ENCODE measurements at regions of chr2 and their contacts with region 1.

Region 1: DNA sequence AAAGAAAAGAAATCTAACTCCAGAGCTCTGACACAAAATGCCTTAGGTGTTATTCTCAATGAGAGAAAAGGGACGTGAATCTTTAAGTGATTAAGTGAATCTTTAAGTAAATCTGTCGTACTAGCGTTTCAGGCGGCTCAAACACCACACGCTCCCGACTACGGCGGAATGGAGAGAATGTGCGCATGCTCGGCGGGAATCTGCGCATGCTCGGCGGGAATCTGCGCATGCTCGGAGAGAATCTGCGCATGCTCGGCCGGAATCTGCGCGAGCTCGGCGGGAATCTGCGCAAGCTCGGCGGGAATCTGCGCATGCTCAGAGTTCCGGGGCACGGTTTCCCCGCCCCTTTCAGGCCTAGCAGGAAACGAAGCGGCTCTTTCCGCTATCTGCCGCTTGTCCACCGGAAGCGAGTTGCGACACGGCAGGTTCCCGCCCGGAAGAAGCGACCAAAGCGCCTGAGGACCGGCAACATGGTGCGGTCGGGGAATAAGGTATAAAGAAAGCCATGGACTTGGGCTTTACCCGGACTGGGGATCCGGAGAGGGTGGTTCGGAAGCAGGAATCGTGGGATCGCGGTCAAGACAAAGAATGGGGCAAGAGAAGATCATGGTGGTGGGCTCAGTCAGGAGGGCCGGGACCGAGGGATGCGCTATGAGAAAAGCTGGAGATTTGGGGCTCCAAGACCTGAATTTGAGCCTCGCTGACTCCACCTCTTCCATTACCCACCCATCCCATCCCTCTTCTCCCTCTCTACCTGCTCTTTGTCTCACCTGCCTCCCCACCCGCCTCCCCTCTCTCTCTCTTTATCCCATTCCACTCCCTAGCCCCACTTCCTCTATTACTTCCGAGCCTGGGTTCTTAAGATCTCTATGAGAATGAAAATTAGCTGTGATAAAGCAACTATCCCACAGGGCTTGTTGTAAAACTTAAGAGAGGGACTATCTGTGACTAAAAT is at the start of gene XRCC5:
- DNase-seq: peak; percentile 99
- H3K4me3 Mint-ChIP-seq: peak within 1 kb of the TSS; percentile 100
- H3K27ac Mint-ChIP-seq: peak within 1 kb of the TSS; percentile 99
- H3K4me1 Mint-ChIP-seq: peaks cover 45% of the 10 kb centered on the region
- H3K27me3 Mint-ChIP-seq: no peaks in the 10 kb centered on the region
- total RNA-seq, gene XRCC5: 486 to 495 TPM

Region 2: GRCh38 chr2:215311625-215312396 is 797.4 kb before region 1 on chr2 and contains the start of gene ATIC:
- CTCF ChIA-PET with region 1: no interaction called
- intact Hi-C with region 1: loop called (anchors 1 kb)
- DNase-seq: peak; percentile 94
- H3K4me3 Mint-ChIP-seq: peak within 1 kb of the TSS; percentile 94
- H3K27ac Mint-ChIP-seq: peak within 1 kb of the TSS; percentile 90
- H3K4me1 Mint-ChIP-seq: peaks cover 36% of the 10 kb centered on the region
- H3K27me3 Mint-ChIP-seq: no peaks in the 10 kb centered on the region
- total RNA-seq, gene ATIC: 281 to 305 TPM

Region 3: DNA sequence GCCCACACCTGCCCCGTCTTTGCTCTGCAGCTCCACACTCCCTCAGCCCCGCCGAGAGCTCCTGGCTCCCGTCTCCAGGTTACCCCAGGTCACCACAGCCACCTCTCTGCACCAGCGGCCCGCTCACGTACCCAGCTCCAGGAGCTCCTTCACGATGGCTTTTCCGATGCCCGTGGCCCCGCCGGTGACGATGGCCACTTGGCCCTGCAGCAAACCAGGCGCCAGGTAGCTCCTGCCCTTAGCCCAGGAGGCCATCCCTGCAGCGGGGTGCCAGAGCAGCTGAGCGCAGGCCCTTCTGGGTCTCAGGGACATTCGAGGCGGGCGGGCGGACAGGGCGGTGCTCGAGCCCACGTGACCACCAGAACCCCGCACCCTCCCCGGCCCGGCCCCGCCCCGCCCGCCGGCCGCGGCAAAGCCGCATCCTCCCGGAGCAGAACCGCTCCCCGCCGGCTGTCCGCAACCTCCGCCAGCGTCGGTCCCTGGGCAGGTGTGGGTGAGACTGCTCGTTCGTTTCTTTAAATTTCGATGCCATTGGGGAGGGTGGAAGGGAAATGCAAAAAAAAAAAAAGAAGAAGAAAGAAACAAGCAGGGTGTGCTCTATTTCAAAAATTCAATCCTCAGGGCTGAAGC is 27.6 kb before region 1 on chr2 and contains the starts of genes PECR and TMEM169:
- CTCF ChIA-PET with region 1: interaction called, 7 read pairs
- intact Hi-C with region 1: loop called (anchors 1 kb)
- DNase-seq: peak; percentile 83
- H3K4me3 Mint-ChIP-seq: peak within 1 kb of the TSS; percentile 87
- H3K27ac Mint-ChIP-seq: peak within 1 kb of the TSS; percentile 75
- H3K4me1 Mint-ChIP-seq: peaks cover 58% of the 10 kb centered on the region
- H3K27me3 Mint-ChIP-seq: no peaks in the 10 kb centered on the region
- total RNA-seq, gene PECR: 18.8 to 20.9 TPM
- total RNA-seq, gene TMEM169: 0.57 to 0.81 TPM

Region 4: DNA sequence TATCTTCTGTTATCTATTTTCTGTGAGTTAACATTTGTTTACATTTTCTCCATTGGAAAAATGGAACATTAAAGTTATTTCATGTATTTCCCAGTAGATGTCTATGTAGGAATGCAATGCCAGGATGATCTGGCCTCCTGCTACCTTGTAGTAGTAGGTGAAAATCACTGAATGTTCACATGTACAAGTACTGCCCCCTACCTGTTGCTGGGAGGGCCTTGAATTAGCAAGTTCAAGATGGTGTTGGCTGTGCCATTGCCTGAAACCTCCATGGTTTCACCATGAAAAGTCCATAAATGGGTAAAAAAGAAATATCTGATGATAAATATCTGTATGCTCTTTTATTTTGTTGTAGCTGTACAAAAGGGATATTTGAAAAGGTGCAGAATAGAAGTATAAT is 30.6 kb after region 1 on chr2:
- CTCF ChIA-PET with region 1: interaction called, 24 read pairs
- intact Hi-C with region 1: loop called (anchors 1 kb)
- DNase-seq: peak; percentile 66
- H3K4me3 Mint-ChIP-seq: no peak overlapping the region
- H3K27ac Mint-ChIP-seq: peak overlapping the region; percentile 14
- H3K4me1 Mint-ChIP-seq: peaks cover 40% of the 10 kb centered on the region
- H3K27me3 Mint-ChIP-seq: no peaks in the 10 kb centered on the region

Region 5: GRCh38 chr2:216339808-216340631 is 230.8 kb after region 1 on chr2:
- CTCF ChIA-PET with region 1: no interaction called
- intact Hi-C with region 1: no loop called
- DNase-seq: no peak
- H3K4me3 Mint-ChIP-seq: no peak overlapping the region
- H3K27ac Mint-ChIP-seq: no peak overlapping the region
- H3K4me1 Mint-ChIP-seq: peaks cover 12% of the 10 kb centered on the region
- H3K27me3 Mint-ChIP-seq: no peaks in the 10 kb centered on the region

Region 6: GRCh38 chr2:216350214-216350789 is 241.1 kb after region 1 on chr2:
- CTCF ChIA-PET with region 1: interaction called, 3 read pairs
- intact Hi-C with region 1: loop called (anchors 2 kb)
- DNase-seq: peak; percentile 56
- H3K4me3 Mint-ChIP-seq: no peak overlapping the region
- H3K27ac Mint-ChIP-seq: peak overlapping the region; percentile 23
- H3K4me1 Mint-ChIP-seq: peaks cover 80% of the 10 kb centered on the region
- H3K27me3 Mint-ChIP-seq: no peaks in the 10 kb centered on the region

Region 7: DNA sequence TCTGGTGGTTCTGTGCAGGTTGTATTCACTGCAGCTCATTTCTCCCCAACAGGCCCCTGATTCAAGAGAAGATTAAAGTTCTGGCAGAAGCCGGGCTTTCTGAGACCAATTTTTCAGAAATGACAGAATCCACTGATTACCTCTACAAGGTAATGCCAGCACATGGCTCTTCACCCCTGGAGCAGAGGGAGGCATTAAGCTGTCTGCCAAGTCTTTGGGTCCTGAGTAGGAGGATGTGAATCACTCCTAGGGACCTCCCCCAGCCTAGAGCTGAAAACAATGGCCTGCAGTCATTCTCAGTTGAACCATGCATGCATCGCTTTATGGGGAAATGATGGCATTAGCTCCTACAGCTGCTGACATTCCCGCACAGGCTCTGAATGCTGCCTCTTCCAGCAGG is 368.9 kb after region 1 on chr2:
- CTCF ChIA-PET with region 1: no interaction called
- intact Hi-C with region 1: loop called (anchors 2 kb)
- DNase-seq: peak; percentile 68
- H3K4me3 Mint-ChIP-seq: no peak overlapping the region
- H3K27ac Mint-ChIP-seq: no peak overlapping the region
- H3K4me1 Mint-ChIP-seq: peaks cover 23% of the 10 kb centered on the region
- H3K27me3 Mint-ChIP-seq: no peaks in the 10 kb centered on the region